ENCODE measurements at regions of chr18 and their contacts with region 1.

Region 1: GRCh38 chr18:9392726-9393125 is 58.2 kb downstream of the TWSG1 start:
- DNase-seq: no peak
- H3K4me3 ChIP-seq: no peak overlapping the region
- H3K27ac ChIP-seq: no peak overlapping the region
- H3K4me1 ChIP-seq: no peaks in the 10 kb centered on the region
- H3K27me3 ChIP-seq: no peaks in the 10 kb centered on the region
- CTCF ChIP-seq: peak in 1 of 3 experiments; percentile 23; a peak in 1 of 4 replicates
- EP300 ChIP-seq: no peak
- POLR2A ChIP-seq: no peak
- RAD21 ChIP-seq: peak; percentile 41 to 43

Region 2: GRCh38 chr18:9366192-9366591 is 26.5 kb before region 1 on chr18:
- CTCF ChIA-PET with region 1: interaction called, 21 read pairs
- POLR2A ChIA-PET with region 1: no interaction called
- DNase-seq: peak; percentile 52 to 59
- H3K4me3 ChIP-seq: no peak overlapping the region
- H3K27ac ChIP-seq: no peak overlapping the region
- H3K4me1 ChIP-seq: peaks cover 0 to 7% (median 1%) of the 10 kb centered on the region in 4 experiments; a peak in 3 of 7 replicates
- H3K27me3 ChIP-seq: no peaks in the 10 kb centered on the region
- CTCF ChIP-seq: peak; percentile 27 to 77 (median 68)
- EP300 ChIP-seq: peak in 1 of 2 experiments; percentile 52; a peak in 1 of 3 replicates
- POLR2A ChIP-seq: no peak
- RAD21 ChIP-seq: peak; percentile 53 to 65

Region 3: GRCh38 chr18:9403795-9404564 is 11.3 kb after region 1 on chr18:
- CTCF ChIA-PET with region 1: interaction called, 23 read pairs
- POLR2A ChIA-PET with region 1: no interaction called
- DNase-seq: peak in 1 of 2 experiments; percentile 68
- H3K4me3 ChIP-seq: no peak overlapping the region
- H3K27ac ChIP-seq: no peak overlapping the region
- H3K4me1 ChIP-seq: 0 out of 7 replicates have a peak, but pooled peaks cover 0 to 2% (median 0%) of the 10 kb centered on the region in 4 experiments
- H3K27me3 ChIP-seq: no peaks in the 10 kb centered on the region
- CTCF ChIP-seq: peak; percentile 61 to 72 (median 67)
- EP300 ChIP-seq: peak in 1 of 2 experiments; percentile 31; a peak in 1 of 3 replicates
- POLR2A ChIP-seq: no peak
- RAD21 ChIP-seq: peak; percentile 81 to 86